ENCODE measurements at regions of chr14 and their contacts with region 1.

Region 1: DNA sequence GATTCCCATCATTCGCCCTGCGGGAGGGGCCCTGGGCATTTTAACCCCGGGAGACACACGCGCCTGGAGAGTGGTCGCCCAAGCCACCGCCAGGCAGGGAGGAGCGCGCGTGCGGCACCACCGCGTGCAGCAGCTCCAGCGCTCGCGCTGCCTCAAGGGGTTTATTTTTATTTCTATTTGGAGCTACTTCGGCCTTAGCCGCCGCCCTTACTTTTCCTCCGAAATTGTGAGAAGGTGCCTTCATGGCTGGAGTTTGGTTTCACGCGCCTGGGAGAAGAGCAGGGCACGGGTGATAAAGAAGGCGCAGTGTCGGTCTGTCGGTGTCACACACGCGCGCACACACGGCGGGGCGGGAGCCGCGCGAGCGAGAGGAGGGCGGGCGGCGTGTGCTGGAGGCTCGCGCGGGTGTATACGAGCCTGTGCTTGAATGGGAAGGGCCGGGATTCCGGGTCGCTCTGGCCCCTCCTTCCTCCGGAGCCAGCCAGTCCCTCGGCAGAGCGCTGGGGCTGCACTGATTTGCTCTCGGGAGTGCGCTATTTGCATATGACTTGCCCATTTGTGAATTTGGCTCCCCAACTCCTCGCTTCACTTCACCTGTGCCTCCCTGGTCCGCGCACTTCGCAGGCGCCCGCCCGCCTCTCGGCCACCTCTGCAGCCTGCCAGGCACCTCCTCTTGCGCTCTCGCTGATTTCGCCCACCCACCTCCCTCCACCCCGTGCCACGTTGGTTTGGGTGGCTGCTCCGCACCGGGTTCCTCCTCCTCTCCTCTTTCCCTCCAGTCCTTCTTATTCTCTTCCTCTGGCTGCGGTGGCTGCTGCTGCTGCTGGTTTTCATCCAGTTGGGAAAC is 932.3 kb downstream of the DIO2 start:
- DNase-seq: peak; percentile 83
- H3K4me3 ChIP-seq: peak overlapping the region; percentile 33 to 62 (median 34)
- H3K27ac ChIP-seq: no peak overlapping the region
- H3K4me1 ChIP-seq: peaks cover 7% of the 10 kb centered on the region
- H3K27me3 ChIP-seq: peaks cover 16 to 33% of the 10 kb centered on the region in 2 experiments
- CTCF ChIP-seq: no peak
- POLR2A ChIP-seq: no peak

Region 2: DNA sequence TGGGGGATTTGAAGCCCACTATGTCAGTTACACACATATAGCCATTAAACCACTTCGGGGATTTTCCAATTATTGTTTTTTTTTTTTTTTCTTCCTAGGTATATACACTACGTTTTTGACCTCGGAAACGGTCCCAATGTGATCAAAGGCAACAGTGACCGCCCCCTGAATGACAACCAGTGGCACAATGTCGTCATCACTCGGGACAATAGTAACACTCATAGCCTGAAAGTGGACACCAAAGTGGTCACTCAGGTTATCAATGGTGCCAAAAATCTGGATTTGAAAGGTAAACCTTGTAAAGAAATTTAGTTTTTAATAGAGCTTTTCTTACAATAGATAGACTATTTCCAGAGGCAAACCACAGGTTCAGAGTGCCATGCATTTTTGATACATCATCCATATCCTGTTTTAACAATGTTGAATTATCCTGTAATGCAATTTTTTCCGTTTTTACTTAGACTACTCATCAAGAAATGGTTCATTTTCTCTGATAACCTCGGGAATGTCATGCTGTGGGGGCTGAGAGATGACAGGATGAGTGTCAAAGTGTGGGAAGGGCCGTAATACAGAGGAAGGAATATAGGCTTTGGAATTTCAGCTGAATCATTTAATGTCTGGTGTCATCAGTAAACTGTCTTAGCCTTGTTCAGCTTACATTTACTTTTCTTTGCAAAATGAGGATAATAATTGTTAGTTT is 311.8 kb before region 1 on chr14:
- CTCF ChIA-PET with region 1: no interaction called
- POLR2A ChIA-PET with region 1: no interaction called
- dilution Hi-C with region 1: no loop called
- intact Hi-C with region 1: loop called (anchors 2 kb)
- DNase-seq: peak; percentile 56
- H3K4me3 ChIP-seq: no peak overlapping the region
- H3K27ac ChIP-seq: peak overlapping the region; percentile 60
- H3K4me1 ChIP-seq: peaks cover 33% of the 10 kb centered on the region
- H3K27me3 ChIP-seq: no peaks in the 10 kb centered on the region
- CTCF ChIP-seq: no peak
- POLR2A ChIP-seq: no peak

Region 3: GRCh38 chr14:79318371-79318770 is 39.4 kb after region 1 on chr14:
- CTCF ChIA-PET with region 1: no interaction called
- POLR2A ChIA-PET with region 1: no interaction called
- dilution Hi-C with region 1: no loop called
- intact Hi-C with region 1: loop called (anchors 5 kb)
- DNase-seq: no peak
- H3K4me3 ChIP-seq: no peak overlapping the region
- H3K27ac ChIP-seq: no peak overlapping the region
- H3K4me1 ChIP-seq: peaks cover 4% of the 10 kb centered on the region
- H3K27me3 ChIP-seq: no peaks in the 10 kb centered on the region
- CTCF ChIP-seq: no peak
- POLR2A ChIP-seq: no peak

Region 4: DNA sequence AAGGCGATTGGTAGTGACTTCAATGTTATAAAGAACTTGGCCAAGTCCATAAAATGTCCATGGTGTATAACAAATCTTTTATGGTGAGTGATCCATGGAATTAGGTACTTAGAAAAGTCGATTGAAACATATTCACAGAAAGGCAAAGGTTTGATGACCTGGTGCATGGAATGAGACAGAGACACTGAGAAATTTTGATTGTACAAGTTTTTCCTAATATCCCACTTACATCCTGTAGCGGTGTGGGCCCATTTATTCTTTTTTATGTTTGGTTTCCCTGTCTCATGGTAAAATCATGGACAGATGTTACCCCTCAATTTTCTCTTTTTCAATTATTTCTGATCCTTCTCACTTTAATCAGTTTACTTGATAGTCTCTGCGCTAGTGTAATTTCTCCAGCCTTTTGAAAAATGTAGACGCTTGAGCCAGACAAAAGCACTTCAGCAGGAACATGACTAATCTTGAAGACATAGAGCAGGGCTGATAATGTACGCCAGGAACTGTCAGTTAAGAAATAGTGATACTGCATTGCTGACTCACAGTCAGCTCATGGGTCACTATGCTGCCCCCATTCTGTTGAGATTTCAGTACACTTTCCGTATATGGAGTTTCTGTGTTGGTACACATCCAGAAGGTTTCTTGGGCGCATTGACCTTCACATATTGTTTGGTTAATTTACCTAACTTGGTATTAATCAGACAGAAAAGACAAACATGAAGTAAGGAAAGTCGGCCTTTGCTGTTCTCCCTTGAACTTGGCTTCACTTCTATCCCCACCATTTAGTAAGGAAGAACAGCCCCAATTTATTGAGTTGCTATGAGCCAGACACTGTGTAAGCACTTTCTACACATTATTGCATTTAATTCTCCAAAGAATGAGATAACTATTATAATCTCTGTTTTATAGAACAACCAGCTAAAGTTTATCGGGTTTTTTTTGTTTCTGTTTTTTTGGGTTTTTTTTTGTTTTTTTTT is 90.6 kb after region 1 on chr14:
- CTCF ChIA-PET with region 1: no interaction called
- POLR2A ChIA-PET with region 1: no interaction called
- dilution Hi-C with region 1: no loop called
- intact Hi-C with region 1: loop called (anchors 2 kb)
- DNase-seq: peak; percentile 88
- H3K4me3 ChIP-seq: no peak overlapping the region
- H3K27ac ChIP-seq: peak overlapping the region; percentile 53
- H3K4me1 ChIP-seq: peaks cover 6% of the 10 kb centered on the region
- H3K27me3 ChIP-seq: no peaks in the 10 kb centered on the region
- CTCF ChIP-seq: no peak
- POLR2A ChIP-seq: no peak

Region 5: DNA sequence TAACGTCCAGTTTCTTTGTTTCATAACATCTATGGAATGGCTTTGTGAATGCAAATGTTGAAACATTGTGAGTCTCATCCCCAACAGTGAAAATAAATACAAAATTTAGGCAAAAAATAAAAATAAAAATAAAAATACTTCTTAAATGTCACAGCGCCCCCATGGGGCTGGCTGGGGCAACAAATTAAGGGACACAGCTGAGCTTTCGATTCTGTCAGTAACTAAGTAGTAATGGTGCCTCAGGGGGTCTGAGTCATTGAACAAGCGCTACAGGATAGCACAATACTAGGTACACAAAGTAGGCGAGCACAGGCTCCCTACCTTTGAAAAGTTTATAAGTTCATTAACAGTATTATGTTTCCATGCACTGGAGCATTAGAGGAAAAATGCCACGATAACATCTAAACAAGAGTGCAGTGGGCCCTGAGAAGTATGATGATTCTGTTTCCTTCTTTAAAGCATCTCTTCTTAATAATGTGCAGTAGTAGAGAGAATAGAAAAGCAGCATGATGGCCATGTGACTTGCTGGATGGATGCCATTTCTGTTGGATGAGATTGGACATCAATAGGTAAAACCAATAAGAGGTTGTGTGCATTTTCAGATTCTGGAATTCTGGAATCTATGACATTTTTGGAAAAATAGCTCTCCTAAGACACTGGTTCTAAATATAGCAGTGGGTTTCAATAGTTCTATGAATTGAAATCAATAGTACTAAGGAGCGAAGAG is 265.1 kb after region 1 on chr14:
- CTCF ChIA-PET with region 1: interaction called, 9 read pairs
- POLR2A ChIA-PET with region 1: no interaction called
- dilution Hi-C with region 1: no loop called
- intact Hi-C with region 1: loop called (anchors 5 kb)
- DNase-seq: peak; percentile 10
- H3K4me3 ChIP-seq: no peak overlapping the region
- H3K27ac ChIP-seq: no peak overlapping the region
- H3K4me1 ChIP-seq: no peaks in the 10 kb centered on the region
- H3K27me3 ChIP-seq: no peaks in the 10 kb centered on the region
- CTCF ChIP-seq: peak; percentile 15 to 26
- POLR2A ChIP-seq: no peak

Measured in endothelial cell of umbilical vein (primary cell).